ENCODE measurements at regions of chr9 and their contacts with region 1.

Region 1: GRCh38 chr9:96566498-96567207 is 53.0 kb downstream of the CDC14B start:
- DNase-seq: peak; percentile 79 to 88 (median 80)
- H3K4me3 ChIP-seq: peak overlapping the region; percentile 75 to 80
- H3K4me3 Mint-ChIP-seq: peak overlapping the region; percentile 88 to 93 (median 91)
- H3K27ac ChIP-seq: peak overlapping the region; percentile 80
- H3K27ac Mint-ChIP-seq: peak overlapping the region; percentile 73 to 90 (median 82)
- H3K4me1 ChIP-seq: peaks cover 18% of the 10 kb centered on the region
- H3K4me1 Mint-ChIP-seq: peaks cover 15 to 30% (median 23%) of the 10 kb centered on the region in 4 donors
- H3K27me3 ChIP-seq: no peaks in the 10 kb centered on the region
- H3K27me3 Mint-ChIP-seq: no peaks in the 10 kb centered on the region

Region 2: DNA sequence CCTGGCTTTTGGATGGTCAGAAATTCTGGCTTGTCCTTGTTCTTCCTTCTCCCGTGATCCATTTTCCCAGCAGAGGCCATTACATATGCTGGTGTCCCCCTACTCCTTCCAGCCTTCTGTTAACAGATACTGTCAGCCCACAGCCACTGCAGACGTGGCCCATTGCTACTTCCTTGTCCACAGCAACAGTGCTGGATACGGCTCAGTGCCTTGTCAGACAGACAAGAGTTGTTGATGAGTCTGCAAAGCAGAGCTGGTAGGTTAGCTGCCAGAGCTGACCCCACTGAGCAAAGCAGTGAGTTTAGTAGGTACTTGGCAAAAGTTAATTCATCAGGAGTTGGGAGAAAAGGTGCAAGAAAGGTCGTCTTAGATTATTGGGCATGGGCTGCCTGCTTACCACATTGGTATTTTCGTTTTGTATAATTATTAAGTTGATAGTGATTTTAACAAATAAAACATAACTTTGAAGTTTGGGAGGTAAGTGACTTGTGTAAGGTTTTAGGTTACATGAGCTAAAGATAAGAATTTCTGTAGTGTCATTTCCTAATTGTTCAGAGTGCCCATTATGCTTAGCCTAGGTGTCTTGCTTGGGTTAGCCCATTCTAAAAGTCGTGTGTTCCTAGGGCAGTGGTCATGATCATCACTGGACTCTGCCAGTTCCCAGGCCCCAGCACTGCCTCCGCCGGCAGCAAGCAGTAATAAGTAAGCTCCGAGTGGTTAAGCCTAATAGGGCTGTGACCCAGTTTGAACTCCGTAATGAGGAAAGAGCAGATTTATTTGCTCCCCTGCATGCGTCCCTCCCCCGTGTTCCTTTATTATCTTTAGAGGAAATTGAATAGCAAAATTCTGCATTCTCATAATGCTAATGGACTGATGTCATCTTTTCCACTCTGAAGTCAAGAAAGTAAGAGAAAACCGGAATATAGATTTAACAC is 1541.2 kb before region 1 on chr9:
- CTCF ChIA-PET with region 1: no interaction called
- POLR2A ChIA-PET with region 1: no interaction called
- intact Hi-C with region 1: no loop called
- DNase-seq: no peak
- H3K4me3 ChIP-seq: no peak overlapping the region
- H3K4me3 Mint-ChIP-seq: no peak overlapping the region
- H3K27ac ChIP-seq: no peak overlapping the region
- H3K27ac Mint-ChIP-seq: no peak overlapping the region
- H3K4me1 ChIP-seq: no peaks in the 10 kb centered on the region
- H3K4me1 Mint-ChIP-seq: no peaks in the 10 kb centered on the region
- H3K27me3 ChIP-seq: no peaks in the 10 kb centered on the region
- H3K27me3 Mint-ChIP-seq: no peaks in the 10 kb centered on the region

Region 3: DNA sequence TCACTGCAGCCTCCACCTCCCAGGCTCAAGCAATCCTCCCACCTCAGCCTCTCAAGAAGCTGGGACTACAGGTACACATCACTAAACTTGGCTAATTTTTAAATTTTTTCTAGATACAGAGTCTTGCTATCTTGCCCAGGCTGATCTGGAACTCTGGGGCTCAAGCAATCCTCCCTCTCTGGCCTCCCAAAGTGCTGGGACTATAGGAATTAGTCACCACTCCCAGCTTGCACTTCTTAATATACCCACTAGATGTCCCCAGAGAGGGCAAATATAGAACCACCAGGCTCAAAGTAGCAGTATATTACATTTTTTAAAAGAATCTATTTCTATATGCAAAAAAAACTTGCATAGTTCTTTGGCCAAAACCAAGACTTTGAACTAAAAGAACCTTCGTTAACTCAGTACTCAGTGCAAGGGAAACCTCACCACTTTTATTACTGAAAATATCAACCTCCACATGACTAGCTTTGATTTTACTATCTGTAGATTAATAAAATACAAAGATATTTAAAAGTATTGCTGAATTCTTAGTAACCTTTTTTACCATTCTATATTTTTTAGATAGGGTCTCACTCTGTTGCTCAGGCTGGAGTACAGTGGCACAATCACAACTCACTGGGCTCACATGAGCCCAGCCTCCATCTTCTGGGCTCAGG is 238.8 kb before region 1 on chr9:
- CTCF ChIA-PET with region 1: interaction called, 19 read pairs
- POLR2A ChIA-PET with region 1: interaction called, 13 read pairs
- intact Hi-C with region 1: loop called (anchors 1 kb)
- DNase-seq: peak; percentile 46 to 66 (median 54)
- H3K4me3 ChIP-seq: no peak overlapping the region
- H3K4me3 Mint-ChIP-seq: no peak overlapping the region
- H3K27ac ChIP-seq: no peak overlapping the region
- H3K27ac Mint-ChIP-seq: peak overlapping the region in 1 of 7 donors; percentile 29
- H3K4me1 ChIP-seq: no peaks in the 10 kb centered on the region
- H3K4me1 Mint-ChIP-seq: no peaks in the 10 kb centered on the region
- H3K27me3 ChIP-seq: no peaks in the 10 kb centered on the region
- H3K27me3 Mint-ChIP-seq: no peaks in the 10 kb centered on the region

Region 4: GRCh38 chr9:96449845-96450612 is 116.6 kb before region 1 on chr9 and contains the start of gene HABP4:
- CTCF ChIA-PET with region 1: interaction called, 4 read pairs
- POLR2A ChIA-PET with region 1: interaction called, 53 read pairs
- intact Hi-C with region 1: loop called (anchors 2 kb)
- DNase-seq: peak; percentile 93 to 94 (median 94)
- H3K4me3 ChIP-seq: peak within 1 kb of the TSS; percentile 48 to 72
- H3K4me3 Mint-ChIP-seq: peak within 1 kb of the TSS; percentile 91 to 96 (median 96)
- H3K27ac ChIP-seq: peak within 1 kb of the TSS; percentile 59
- H3K27ac Mint-ChIP-seq: peak within 1 kb of the TSS; percentile 82 to 98 (median 94)
- H3K4me1 ChIP-seq: peaks cover 23% of the 10 kb centered on the region
- H3K4me1 Mint-ChIP-seq: peaks cover 16 to 32% (median 21%) of the 10 kb centered on the region in 4 donors
- H3K27me3 ChIP-seq: no peaks in the 10 kb centered on the region
- H3K27me3 Mint-ChIP-seq: no peaks in the 10 kb centered on the region
- total RNA-seq, gene HABP4: 35.5 to 36.6 TPM

Region 5: DNA sequence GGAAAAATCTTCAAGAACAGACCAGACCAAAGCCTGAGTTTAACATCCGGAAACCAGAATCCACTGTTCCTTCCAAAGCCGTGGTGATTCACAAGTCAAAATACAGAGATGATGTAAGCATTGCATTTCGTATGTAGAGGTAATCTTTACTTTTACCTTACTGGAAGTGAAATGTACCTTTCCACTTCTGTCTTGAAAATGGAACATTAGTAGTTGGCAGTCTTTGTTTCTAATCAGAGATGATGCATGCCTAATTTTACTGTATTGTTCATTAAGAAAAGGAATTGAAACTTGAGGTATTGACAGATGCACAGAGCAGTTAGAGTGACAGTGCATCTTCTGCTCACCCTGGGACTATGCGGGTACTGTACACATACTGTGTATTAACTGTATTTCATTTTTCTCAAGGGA is 82.1 kb before region 1 on chr9:
- CTCF ChIA-PET with region 1: no interaction called
- POLR2A ChIA-PET with region 1: no interaction called
- intact Hi-C with region 1: loop called (anchors 5 kb)
- DNase-seq: no peak
- H3K4me3 ChIP-seq: no peak overlapping the region
- H3K4me3 Mint-ChIP-seq: no peak overlapping the region
- H3K27ac ChIP-seq: no peak overlapping the region
- H3K27ac Mint-ChIP-seq: peak overlapping the region in 2 of 7 donors; percentile 17 to 31
- H3K4me1 ChIP-seq: no peaks in the 10 kb centered on the region
- H3K4me1 Mint-ChIP-seq: peaks cover 1 to 12% (median 4%) of the 10 kb centered on the region in 4 donors
- H3K27me3 ChIP-seq: no peaks in the 10 kb centered on the region
- H3K27me3 Mint-ChIP-seq: no peaks in the 10 kb centered on the region

Region 6: DNA sequence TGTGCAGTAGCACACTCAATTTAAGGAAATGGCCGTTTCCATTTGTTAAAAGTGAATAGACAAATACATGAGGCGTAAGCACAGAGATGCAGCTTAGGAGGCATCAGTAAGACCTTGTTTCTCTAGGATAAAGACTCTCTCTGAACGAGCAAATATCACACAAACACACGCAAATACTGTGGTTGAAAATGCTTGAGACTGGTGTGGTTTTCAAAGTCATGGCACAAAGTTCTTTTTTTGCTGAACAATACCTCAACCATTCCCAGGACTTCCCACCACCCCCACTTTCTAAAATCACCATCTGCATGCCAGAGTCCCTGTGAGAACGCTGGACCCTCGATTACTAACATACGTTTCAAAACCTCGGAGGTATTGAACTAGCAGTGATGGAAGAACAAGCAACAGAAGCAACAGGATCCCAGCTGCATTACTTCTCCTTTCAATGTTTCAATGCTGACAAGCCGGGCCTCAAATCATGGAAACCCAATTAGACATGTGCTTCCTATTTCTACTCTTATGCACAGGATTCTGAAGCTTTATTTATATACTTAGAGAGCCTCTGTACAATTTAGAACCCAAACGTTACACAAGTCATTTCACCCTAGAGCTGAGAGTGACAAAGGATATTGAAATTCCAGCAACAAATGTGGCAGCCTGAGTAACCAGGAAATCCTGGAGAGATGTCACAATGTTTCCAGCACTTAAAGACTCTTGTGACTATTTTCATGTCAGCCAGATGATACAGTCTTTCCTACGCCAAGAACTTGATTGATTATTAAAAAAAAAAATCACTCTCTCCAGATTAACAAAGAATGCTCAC is 10.9 kb before region 1 on chr9:
- CTCF ChIA-PET with region 1: interaction called, 13 read pairs
- POLR2A ChIA-PET with region 1: interaction called, 6 read pairs
- intact Hi-C with region 1: no loop called
- DNase-seq: no peak
- H3K4me3 ChIP-seq: no peak overlapping the region
- H3K4me3 Mint-ChIP-seq: no peak overlapping the region
- H3K27ac ChIP-seq: no peak overlapping the region
- H3K27ac Mint-ChIP-seq: peak overlapping the region in 1 of 7 donors; percentile 37
- H3K4me1 ChIP-seq: no peaks in the 10 kb centered on the region
- H3K4me1 Mint-ChIP-seq: peaks cover 4 to 13% (median 8%) of the 10 kb centered on the region in 4 donors
- H3K27me3 ChIP-seq: no peaks in the 10 kb centered on the region
- H3K27me3 Mint-ChIP-seq: no peaks in the 10 kb centered on the region

Region 7: DNA sequence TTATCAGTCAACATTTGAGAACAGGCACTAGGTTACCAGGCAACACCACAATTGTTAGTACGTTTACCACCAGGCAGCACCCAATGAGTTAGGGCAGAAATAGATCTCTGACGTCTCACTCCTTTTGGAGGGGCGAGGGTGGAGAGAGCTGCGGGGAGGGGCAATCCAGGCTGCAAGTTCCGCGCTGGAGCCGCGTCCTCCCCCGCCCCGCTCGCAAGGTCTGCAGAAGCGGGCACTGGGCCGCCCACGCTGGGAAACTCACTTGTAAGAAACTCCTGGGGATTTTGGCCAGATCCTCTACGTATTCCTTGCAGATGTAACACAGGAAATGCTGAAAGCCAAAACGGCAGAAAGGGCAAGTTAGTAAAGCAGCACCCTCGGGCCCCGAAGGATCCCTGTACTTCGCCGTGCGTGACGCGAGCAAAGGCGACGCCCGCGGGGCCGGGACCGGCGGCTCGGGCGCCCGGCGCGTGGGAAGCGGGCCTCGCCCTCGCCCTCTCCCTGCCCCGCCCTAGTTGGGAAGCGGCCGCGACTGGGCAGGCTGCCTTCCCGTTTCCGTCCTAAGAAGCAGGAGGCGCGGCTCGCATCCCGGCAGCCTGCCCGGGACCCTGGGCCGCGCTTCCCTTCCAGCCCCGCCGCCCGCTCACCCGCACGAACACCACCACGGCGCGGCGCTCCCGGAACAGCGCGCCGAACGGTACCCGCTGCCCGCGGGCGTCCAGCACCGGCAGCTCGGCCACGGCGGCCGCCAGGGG is 88.0 kb after region 1 on chr9:
- CTCF ChIA-PET with region 1: no interaction called
- POLR2A ChIA-PET with region 1: interaction called, 3 read pairs
- intact Hi-C with region 1: loop called (anchors 2 kb)
- DNase-seq: peak; percentile 85 to 95 (median 91)
- H3K4me3 ChIP-seq: peak overlapping the region in 1 of 2 donors; percentile 70
- H3K4me3 Mint-ChIP-seq: peak overlapping the region; percentile 90 to 98 (median 94)
- H3K27ac ChIP-seq: peak overlapping the region; percentile 86
- H3K27ac Mint-ChIP-seq: peak overlapping the region; percentile 98 to 99 (median 99)
- H3K4me1 ChIP-seq: peaks cover 18% of the 10 kb centered on the region
- H3K4me1 Mint-ChIP-seq: peaks cover 18 to 34% (median 26%) of the 10 kb centered on the region in 4 donors
- H3K27me3 ChIP-seq: no peaks in the 10 kb centered on the region
- H3K27me3 Mint-ChIP-seq: peaks cover 0 to 2% of the 10 kb centered on the region in 2 donors

Region 8: GRCh38 chr9:96777426-96777864 is 210.8 kb after region 1 on chr9:
- CTCF ChIA-PET with region 1: no interaction called
- POLR2A ChIA-PET with region 1: no interaction called
- intact Hi-C with region 1: loop called (anchors 5 kb)
- DNase-seq: peak in 2 of 5 donors; percentile 25 to 31
- H3K4me3 ChIP-seq: peak overlapping the region; percentile 82 to 89
- H3K4me3 Mint-ChIP-seq: peak overlapping the region; percentile 90 to 100 (median 98)
- H3K27ac ChIP-seq: peak overlapping the region; percentile 62
- H3K27ac Mint-ChIP-seq: peak overlapping the region; percentile 86 to 99 (median 98)
- H3K4me1 ChIP-seq: peaks cover 19% of the 10 kb centered on the region
- H3K4me1 Mint-ChIP-seq: peaks cover 27 to 51% (median 40%) of the 10 kb centered on the region in 4 donors
- H3K27me3 ChIP-seq: no peaks in the 10 kb centered on the region
- H3K27me3 Mint-ChIP-seq: no peaks in the 10 kb centered on the region